ENCODE measurements at regions of chr9 and their contacts with region 1.

Region 1: GRCh38 chr9:29393064-29393463 is 1819.8 kb upstream of the C9orf72 start:
- DNase-seq: no peak
- ATAC-seq: no peak
- H3K4me3 ChIP-seq: no peak overlapping the region
- H3K27ac ChIP-seq: no peak overlapping the region
- H3K4me1 ChIP-seq: no peaks in the 10 kb centered on the region
- H3K27me3 ChIP-seq: no peaks in the 10 kb centered on the region
- CTCF ChIP-seq: no peak
- POLR2A ChIP-seq: no peak

Region 2: DNA sequence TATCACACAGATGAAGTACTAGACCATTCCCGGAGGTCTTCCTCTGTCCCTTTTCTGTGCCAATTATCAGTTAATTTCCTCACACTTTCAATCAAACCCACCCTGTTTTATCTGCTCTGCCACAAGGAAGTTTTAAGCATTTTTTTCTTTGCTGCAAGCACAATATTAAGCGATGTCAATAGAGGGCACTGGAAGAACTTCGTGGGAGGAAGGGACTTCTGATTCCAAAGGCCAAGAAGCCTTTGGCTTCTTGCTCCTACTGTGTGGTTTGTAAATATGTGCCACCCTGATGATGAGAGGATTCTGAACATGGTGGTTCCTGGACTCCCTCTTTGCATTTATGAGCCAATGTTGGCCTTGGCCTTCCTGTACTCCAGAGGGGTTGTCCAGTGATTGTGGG is 107.2 kb before region 1 on chr9:
- in situ Hi-C with region 1: loop called in 1 of 4 experiments (anchors 25 kb)
- intact Hi-C with region 1: no loop called
- DNase-seq: no peak
- ATAC-seq: no peak
- H3K4me3 ChIP-seq: no peak overlapping the region
- H3K27ac ChIP-seq: no peak overlapping the region
- H3K4me1 ChIP-seq: no peaks in the 10 kb centered on the region
- H3K27me3 ChIP-seq: no peaks in the 10 kb centered on the region
- CTCF ChIP-seq: no peak
- POLR2A ChIP-seq: no peak

Region 3: DNA sequence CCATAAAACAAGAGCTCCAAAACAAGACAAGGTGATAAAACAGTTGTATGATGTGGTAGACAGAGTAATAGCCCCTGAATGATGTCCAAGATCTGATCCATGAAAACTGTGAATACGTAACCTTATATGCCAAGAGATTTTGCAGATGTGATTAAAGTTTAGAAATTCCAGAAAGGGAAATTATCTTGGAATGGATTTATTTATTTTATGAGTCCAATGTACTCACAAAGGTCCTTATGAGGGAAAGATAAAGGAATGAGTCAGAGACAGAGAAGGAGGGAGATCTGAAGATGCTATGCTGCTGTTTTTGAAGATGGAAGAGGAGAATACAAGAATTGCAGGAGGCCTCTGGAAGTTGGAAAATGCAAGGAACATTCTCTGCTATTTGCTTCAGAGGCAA is 44.0 kb before region 1 on chr9:
- in situ Hi-C with region 1: no loop called
- intact Hi-C with region 1: no loop called
- DNase-seq: no peak
- ATAC-seq: no peak
- H3K4me3 ChIP-seq: no peak overlapping the region
- H3K27ac ChIP-seq: no peak overlapping the region
- H3K4me1 ChIP-seq: no peaks in the 10 kb centered on the region
- H3K27me3 ChIP-seq: no peaks in the 10 kb centered on the region
- CTCF ChIP-seq: no peak
- POLR2A ChIP-seq: no peak

Region 4: GRCh38 chr9:29439961-29440360 is 46.9 kb after region 1 on chr9:
- in situ Hi-C with region 1: no loop called
- intact Hi-C with region 1: loop called (anchors 10 kb)
- DNase-seq: no peak
- ATAC-seq: no peak
- H3K4me3 ChIP-seq: no peak overlapping the region
- H3K27ac ChIP-seq: no peak overlapping the region
- H3K4me1 ChIP-seq: no peaks in the 10 kb centered on the region
- H3K27me3 ChIP-seq: no peaks in the 10 kb centered on the region
- CTCF ChIP-seq: no peak
- POLR2A ChIP-seq: no peak

Region 5: GRCh38 chr9:29668732-29669131 is 275.7 kb after region 1 on chr9:
- in situ Hi-C with region 1: no loop called
- intact Hi-C with region 1: no loop called
- DNase-seq: no peak
- ATAC-seq: no peak
- H3K4me3 ChIP-seq: no peak overlapping the region
- H3K27ac ChIP-seq: no peak overlapping the region
- H3K4me1 ChIP-seq: no peaks in the 10 kb centered on the region
- H3K27me3 ChIP-seq: no peaks in the 10 kb centered on the region
- CTCF ChIP-seq: no peak
- POLR2A ChIP-seq: no peak

Region 6: GRCh38 chr9:29717631-29718030 is 324.6 kb after region 1 on chr9:
- in situ Hi-C with region 1: no loop called
- intact Hi-C with region 1: no loop called
- DNase-seq: no peak
- ATAC-seq: no peak
- H3K4me3 ChIP-seq: no peak overlapping the region
- H3K27ac ChIP-seq: no peak overlapping the region
- H3K4me1 ChIP-seq: no peaks in the 10 kb centered on the region
- H3K27me3 ChIP-seq: no peaks in the 10 kb centered on the region
- CTCF ChIP-seq: no peak
- POLR2A ChIP-seq: no peak

Measured in gastrocnemius medialis (tissue), 4 donors.